ENCODE measurements at regions of chr15 and their contacts with region 1.

Region 1: GRCh38 chr15:71149646-71150557 is 34.6 kb downstream of the THSD4 start:
- DNase-seq: no peak

Region 2: GRCh38 chr15:69530991-69531664 is 1618.8 kb before region 1 on chr15:
- intact Hi-C with region 1: loop called in 1 of 2 experiments (anchors 5 kb)
- DNase-seq: peak; percentile 45

Region 3: GRCh38 chr15:71301958-71302621 is 152.2 kb after region 1 on chr15:
- intact Hi-C with region 1: no loop called
- DNase-seq: no peak